ENCODE measurements at regions of chr2 and their contacts with region 1.

Region 1: GRCh38 chr2:85772019-85772745 is 18.4 kb downstream of the ATOH8 start:
- DNase-seq: peak; percentile 82 to 97
- H3K4me3 ChIP-seq: peak overlapping the region; percentile 41; the same call in 1 of the 2 replicates
- H3K27ac ChIP-seq: no peak overlapping the region
- H3K4me1 ChIP-seq: peaks cover 20% of the 10 kb centered on the region
- H3K27me3 ChIP-seq: peaks cover 6% of the 10 kb centered on the region; the same call in 1 of the 2 replicates
- CTCF ChIP-seq: no peak

Region 2: GRCh38 chr2:85705680-85706039 is 66.5 kb before region 1 on chr2:
- CTCF ChIA-PET with region 1: no interaction called
- POLR2A ChIA-PET with region 1: no interaction called
- intact Hi-C with region 1: no loop called
- DNase-seq: peak; percentile 45 to 89
- H3K4me3 ChIP-seq: 0 out of 2 replicates have a peak overlapping the region, but pooled peaks have one; percentile 17
- H3K27ac ChIP-seq: peak overlapping the region; percentile 95
- H3K4me1 ChIP-seq: peaks cover 54% of the 10 kb centered on the region
- H3K27me3 ChIP-seq: no peaks in the 10 kb centered on the region
- CTCF ChIP-seq: no peak

Region 3: DNA sequence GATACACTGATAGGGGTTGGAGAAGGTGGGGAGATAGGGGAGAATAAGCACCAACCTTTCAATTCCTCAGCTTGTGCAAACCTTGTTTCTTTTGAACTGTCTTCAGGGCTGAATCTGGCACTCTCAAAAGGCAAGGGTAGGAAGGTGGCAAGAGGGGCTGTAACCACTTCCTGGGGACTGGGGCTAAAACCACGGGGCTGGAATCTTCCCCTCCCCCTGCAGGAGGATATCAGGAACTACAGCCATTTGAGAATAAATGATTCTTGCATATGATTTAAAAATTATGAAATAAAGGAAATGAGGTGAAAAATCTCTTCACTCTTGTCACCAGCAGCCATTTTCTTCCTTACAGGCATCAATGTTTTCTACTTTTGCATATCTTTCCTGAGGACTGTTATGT is 32.4 kb after region 1 on chr2:
- CTCF ChIA-PET with region 1: interaction called, 6 read pairs
- POLR2A ChIA-PET with region 1: no interaction called
- intact Hi-C with region 1: loop called (anchors 1 kb)
- DNase-seq: no peak
- H3K4me3 ChIP-seq: no peak overlapping the region
- H3K27ac ChIP-seq: no peak overlapping the region
- H3K4me1 ChIP-seq: peaks cover 6% of the 10 kb centered on the region
- H3K27me3 ChIP-seq: no peaks in the 10 kb centered on the region
- CTCF ChIP-seq: peak; percentile 78